Activated CD4-positive, alpha-beta memory T cell treated with anti-CD3 and anti-CD28 coated beads for 36 hours (primary cell): ENCODE measurements at regions of chr4 and their contacts with region 1.

Region 1: GRCh38 chr4:24557026-24558025 is 27.0 kb downstream of the DHX15 start:
- DNase-seq: no peak
- H3K4me3 Mint-ChIP-seq: peak overlapping the region; percentile 7
- H3K27ac Mint-ChIP-seq: peak overlapping the region; percentile 47
- H3K4me1 Mint-ChIP-seq: peaks cover 70% of the 10 kb centered on the region
- H3K27me3 Mint-ChIP-seq: no peaks in the 10 kb centered on the region

Region 2: DNA sequence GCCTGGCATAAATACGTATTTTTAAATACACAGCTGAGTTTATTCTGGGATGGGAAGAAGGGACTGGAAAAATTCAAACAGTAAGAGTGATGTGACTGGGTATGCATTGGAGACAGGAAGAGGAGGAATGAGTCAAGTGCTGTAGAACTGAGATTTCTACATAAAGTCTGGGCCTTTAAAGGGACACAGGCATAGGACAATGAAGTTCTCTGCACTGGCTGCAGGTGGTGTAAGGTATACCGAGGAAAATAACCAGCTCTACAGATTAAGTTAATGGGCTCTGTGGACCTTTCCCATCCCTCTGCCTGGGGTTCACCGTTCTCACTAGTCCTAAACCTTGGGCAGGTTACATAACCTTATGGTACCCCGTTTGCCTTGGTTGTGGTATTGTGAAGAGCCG is 41.6 kb before region 1 on chr4:
- CTCF ChIA-PET with region 1: no interaction called
- POLR2A ChIA-PET with region 1: no interaction called
- intact Hi-C with region 1: loop called (anchors 2 kb)
- DNase-seq: no peak
- H3K4me3 Mint-ChIP-seq: no peak overlapping the region
- H3K27ac Mint-ChIP-seq: no peak overlapping the region
- H3K4me1 Mint-ChIP-seq: peaks cover 17% of the 10 kb centered on the region
- H3K27me3 Mint-ChIP-seq: no peaks in the 10 kb centered on the region

Region 3: GRCh38 chr4:24570574-24571236 is 13.4 kb after region 1 on chr4:
- CTCF ChIA-PET with region 1: interaction called, 15 read pairs
- POLR2A ChIA-PET with region 1: interaction called, 5 read pairs
- intact Hi-C with region 1: loop called (anchors 2 kb)
- DNase-seq: no peak
- H3K4me3 Mint-ChIP-seq: no peak overlapping the region
- H3K27ac Mint-ChIP-seq: no peak overlapping the region
- H3K4me1 Mint-ChIP-seq: peaks cover 71% of the 10 kb centered on the region
- H3K27me3 Mint-ChIP-seq: no peaks in the 10 kb centered on the region